Ascending aorta (tissue), 2 donors: ENCODE measurements at regions of chrX and their contacts with region 1.

Region 1: DNA sequence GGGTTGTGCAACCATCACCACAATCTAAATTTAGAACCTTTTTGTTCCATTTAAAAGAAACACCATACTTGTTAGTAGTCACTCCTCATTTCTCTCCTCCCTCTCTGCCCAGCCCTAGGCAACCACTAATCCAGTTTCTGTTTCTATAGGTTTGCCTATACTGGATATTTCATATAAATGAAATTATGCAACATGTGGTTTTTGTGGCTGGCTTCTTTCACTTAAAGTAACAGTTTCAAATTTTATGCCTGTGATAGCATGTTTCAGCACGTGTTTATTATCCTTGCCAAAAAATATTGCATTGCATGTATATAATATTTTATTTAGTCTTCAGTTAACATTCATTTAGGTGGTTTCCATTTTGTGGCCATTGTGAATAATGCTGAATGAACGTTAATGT is 437.6 kb downstream of the IL1RAPL1 start:
- DNase-seq: no peak
- H3K4me3 ChIP-seq: no peak overlapping the region
- H3K27ac ChIP-seq: no peak overlapping the region
- H3K4me1 ChIP-seq: no peaks in the 10 kb centered on the region
- H3K27me3 ChIP-seq: no peaks in the 10 kb centered on the region
- CTCF ChIP-seq: no peak

Region 2: GRCh38 chrX:29090811-29091210 is 65.9 kb after region 1 on chrX:
- intact Hi-C with region 1: no loop called
- DNase-seq: no peak
- H3K4me3 ChIP-seq: no peak overlapping the region
- H3K27ac ChIP-seq: no peak overlapping the region
- H3K4me1 ChIP-seq: no peaks in the 10 kb centered on the region
- H3K27me3 ChIP-seq: no peaks in the 10 kb centered on the region
- CTCF ChIP-seq: peak in 1 of 3 experiments; percentile 25

Region 3: GRCh38 chrX:29231800-29232199 is 206.9 kb after region 1 on chrX:
- intact Hi-C with region 1: loop called (anchors 5 kb)
- DNase-seq: no peak
- H3K4me3 ChIP-seq: no peak overlapping the region
- H3K27ac ChIP-seq: no peak overlapping the region
- H3K4me1 ChIP-seq: no peaks in the 10 kb centered on the region
- H3K27me3 ChIP-seq: no peaks in the 10 kb centered on the region
- CTCF ChIP-seq: peak in 1 of 3 experiments; percentile 22